ENCODE measurements at regions of chr10 and their contacts with region 1.

Region 1: GRCh38 chr10:27568196-27569175 is 64.4 kb downstream of the RAB18 start:
- DNase-seq: no peak
- ATAC-seq: no peak
- H3K4me3 ChIP-seq: no peak overlapping the region
- H3K27ac ChIP-seq: no peak overlapping the region
- H3K4me1 ChIP-seq: no peaks in the 10 kb centered on the region
- H3K27me3 ChIP-seq: no peaks in the 10 kb centered on the region
- CTCF ChIP-seq: no peak
- POLR2A ChIP-seq: no peak
- RAD21 ChIP-seq: no peak

Region 2: DNA sequence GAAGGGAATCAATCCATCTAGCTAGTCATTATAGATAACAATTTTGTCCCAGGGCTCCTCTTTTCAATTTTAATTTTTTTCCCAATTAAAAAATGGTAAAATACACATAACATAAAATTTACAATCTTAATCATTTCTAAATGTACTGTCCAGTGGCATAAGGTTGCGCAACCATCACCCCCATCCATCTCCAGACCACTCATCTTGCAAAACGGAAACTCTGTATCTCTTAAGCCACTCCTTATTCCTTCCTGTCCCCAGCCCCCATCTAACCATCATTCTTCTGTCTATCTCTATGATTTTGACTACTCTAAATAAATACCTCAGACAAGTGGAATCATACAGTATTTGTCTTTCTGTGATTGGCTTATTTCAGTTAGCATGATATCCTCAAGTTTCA is 110.5 kb before region 1 on chr10:
- CTCF ChIA-PET with region 1: no interaction called
- POLR2A ChIA-PET with region 1: no interaction called
- dilution Hi-C with region 1: no loop called
- in situ Hi-C with region 1: no loop called
- intact Hi-C with region 1: no loop called
- DNase-seq: no peak
- ATAC-seq: no peak
- H3K4me3 ChIP-seq: no peak overlapping the region
- H3K27ac ChIP-seq: no peak overlapping the region
- H3K4me1 ChIP-seq: no peaks in the 10 kb centered on the region
- H3K27me3 ChIP-seq: peaks cover 5% of the 10 kb centered on the region
- CTCF ChIP-seq: no peak
- POLR2A ChIP-seq: no peak
- RAD21 ChIP-seq: no peak

Region 3: GRCh38 chr10:27601503-27601902 is 33.0 kb after region 1 on chr10:
- CTCF ChIA-PET with region 1: no interaction called
- POLR2A ChIA-PET with region 1: no interaction called
- dilution Hi-C with region 1: no loop called
- in situ Hi-C with region 1: no loop called
- intact Hi-C with region 1: no loop called
- DNase-seq: peak; percentile 4
- ATAC-seq: peak; percentile 53
- H3K4me3 ChIP-seq: no peak overlapping the region
- H3K27ac ChIP-seq: no peak overlapping the region
- H3K4me1 ChIP-seq: peaks cover 3% of the 10 kb centered on the region; the same call in 1 of the 2 replicates
- H3K27me3 ChIP-seq: peaks cover 2% of the 10 kb centered on the region; the same call in 1 of the 2 replicates
- CTCF ChIP-seq: no peak
- POLR2A ChIP-seq: no peak
- RAD21 ChIP-seq: no peak

Region 4: DNA sequence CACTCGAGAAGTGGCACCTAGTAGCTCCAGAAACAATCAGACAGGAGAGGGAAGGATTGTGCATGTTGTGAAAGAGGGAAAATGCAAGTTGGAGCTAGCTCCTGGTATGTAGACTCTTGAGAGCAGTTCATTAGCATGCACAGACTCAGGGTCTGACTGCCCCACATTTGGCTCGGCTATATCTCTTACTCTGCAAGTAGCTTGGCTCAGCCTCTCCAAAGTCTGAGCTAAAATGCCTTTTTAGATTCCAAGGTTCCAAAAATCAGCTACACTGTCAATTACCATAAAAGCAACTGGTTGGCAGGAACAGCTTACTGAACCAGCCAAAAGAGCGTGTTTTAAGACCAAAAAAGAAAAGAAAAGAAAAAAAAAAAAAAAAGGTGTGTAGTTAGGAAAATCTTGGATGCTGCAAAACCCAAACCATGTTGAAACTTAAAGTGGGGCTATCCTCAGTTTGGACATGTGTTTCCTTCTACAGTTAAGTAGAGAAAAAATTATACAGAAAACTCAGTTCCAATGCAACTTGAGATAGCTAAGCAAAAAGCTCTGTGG is 111.6 kb after region 1 on chr10:
- CTCF ChIA-PET with region 1: no interaction called
- POLR2A ChIA-PET with region 1: interaction called, 11 read pairs
- dilution Hi-C with region 1: no loop called
- in situ Hi-C with region 1: no loop called
- intact Hi-C with region 1: no loop called
- DNase-seq: no peak
- ATAC-seq: peak; percentile 46
- H3K4me3 ChIP-seq: no peak overlapping the region
- H3K27ac ChIP-seq: no peak overlapping the region
- H3K4me1 ChIP-seq: peaks cover 2% of the 10 kb centered on the region
- H3K27me3 ChIP-seq: no peaks in the 10 kb centered on the region
- CTCF ChIP-seq: no peak
- POLR2A ChIP-seq: no peak
- RAD21 ChIP-seq: no peak

Region 5: GRCh38 chr10:27748601-27749000 is 180.1 kb after region 1 on chr10:
- CTCF ChIA-PET with region 1: no interaction called
- POLR2A ChIA-PET with region 1: interaction called, 10 read pairs
- dilution Hi-C with region 1: no loop called
- in situ Hi-C with region 1: no loop called
- intact Hi-C with region 1: no loop called
- DNase-seq: no peak
- ATAC-seq: no peak
- H3K4me3 ChIP-seq: no peak overlapping the region
- H3K27ac ChIP-seq: no peak overlapping the region
- H3K4me1 ChIP-seq: peaks cover 3% of the 10 kb centered on the region; the same call in 1 of the 2 replicates
- H3K27me3 ChIP-seq: peaks cover 59% of the 10 kb centered on the region
- CTCF ChIP-seq: no peak
- POLR2A ChIP-seq: no peak
- RAD21 ChIP-seq: no peak

Measured in IMR-90 (cell line).